ENCODE measurements at regions of chr1 and their contacts with region 1.

Region 1: GRCh38 chr1:200510228-200510623 is 100.4 kb upstream of the ZNF281 start:
- DNase-seq: peak in 34 of 35 experiments; percentile 14 to 83 (median 44)
- ATAC-seq: peak; percentile 65 to 80 (median 73)
- H3K4me3 ChIP-seq: no peak overlapping the region
- H3K4me3 Mint-ChIP-seq: no peak overlapping the region
- H3K27ac ChIP-seq: no peak overlapping the region
- H3K27ac Mint-ChIP-seq: no peak overlapping the region
- H3K4me1 ChIP-seq: no peaks in the 10 kb centered on the region
- H3K4me1 Mint-ChIP-seq: peaks cover 0 to 4% (median 3%) of the 10 kb centered on the region in 3 donors
- H3K27me3 ChIP-seq: peaks cover 0 to 6% of the 10 kb centered on the region in 2 experiments
- H3K27me3 Mint-ChIP-seq: peaks cover 0 to 14% of the 10 kb centered on the region in 2 donors

Region 2: DNA sequence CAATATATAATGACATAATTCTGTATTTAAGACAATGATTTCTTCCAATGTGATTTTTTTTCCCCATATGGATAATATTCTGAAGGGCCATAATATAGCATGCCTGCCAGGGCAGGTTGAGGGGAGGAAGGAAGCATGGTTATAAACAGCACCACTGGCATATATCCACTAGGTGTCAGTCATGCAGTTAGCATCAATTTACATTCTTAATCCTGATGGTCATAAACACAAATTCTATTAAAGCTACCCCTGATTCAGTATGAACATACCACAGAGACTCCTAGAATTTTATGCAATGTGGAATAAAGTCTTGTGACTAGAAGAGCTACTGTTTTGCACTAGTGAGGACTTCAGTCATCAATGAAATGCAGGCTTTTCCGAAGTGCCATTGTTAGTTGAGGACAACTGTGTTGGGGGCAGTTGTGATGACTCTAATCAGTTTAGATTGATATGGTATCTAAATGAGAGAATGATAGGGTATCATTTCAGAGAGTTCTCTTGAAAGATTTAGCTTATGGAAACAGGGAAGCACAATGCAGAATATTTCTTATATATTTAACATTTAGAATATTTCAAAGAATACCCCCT is 825.4 kb before region 1 on chr1:
- CTCF ChIA-PET with region 1: interaction called, 11 to 18 read pairs
- POLR2A ChIA-PET with region 1: no interaction called
- DNase-seq: peak in 9 of 35 experiments; percentile 0 to 59 (median 5)
- ATAC-seq: peak in 2 of 4 experiments; percentile 41 to 59
- H3K4me3 ChIP-seq: no peak overlapping the region
- H3K4me3 Mint-ChIP-seq: no peak overlapping the region
- H3K27ac ChIP-seq: no peak overlapping the region
- H3K27ac Mint-ChIP-seq: no peak overlapping the region
- H3K4me1 ChIP-seq: no peaks in the 10 kb centered on the region
- H3K4me1 Mint-ChIP-seq: no peaks in the 10 kb centered on the region
- H3K27me3 ChIP-seq: no peaks in the 10 kb centered on the region
- H3K27me3 Mint-ChIP-seq: peaks cover 11% of the 10 kb centered on the region in 2 donors

Region 3: DNA sequence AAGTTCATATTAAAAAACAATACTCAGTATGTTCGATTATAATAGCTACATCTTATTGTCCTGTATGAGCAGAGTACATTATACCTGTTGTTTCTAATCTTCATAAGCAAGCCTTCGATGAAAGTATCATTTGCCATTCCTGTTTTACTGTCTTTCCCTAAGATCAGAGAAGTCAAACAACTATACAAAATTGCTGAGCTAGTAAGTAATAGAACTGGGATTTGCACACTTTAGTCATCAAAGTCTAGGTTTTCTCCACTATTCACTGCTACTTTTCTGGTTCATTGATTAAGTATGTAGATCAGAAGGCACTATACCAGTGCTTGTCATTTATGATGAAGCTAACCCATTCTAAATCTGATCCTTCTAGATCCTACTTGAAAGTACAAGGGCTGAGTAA is 373.8 kb before region 1 on chr1:
- CTCF ChIA-PET with region 1: interaction called, 3 to 11 read pairs
- POLR2A ChIA-PET with region 1: no interaction called
- DNase-seq: no peak
- ATAC-seq: no peak
- H3K4me3 ChIP-seq: no peak overlapping the region
- H3K4me3 Mint-ChIP-seq: no peak overlapping the region
- H3K27ac ChIP-seq: no peak overlapping the region
- H3K27ac Mint-ChIP-seq: no peak overlapping the region
- H3K4me1 ChIP-seq: no peaks in the 10 kb centered on the region
- H3K4me1 Mint-ChIP-seq: peaks cover 0 to 4% (median 1%) of the 10 kb centered on the region in 3 donors
- H3K27me3 ChIP-seq: no peaks in the 10 kb centered on the region
- H3K27me3 Mint-ChIP-seq: peaks cover 0 to 2% of the 10 kb centered on the region in 2 donors

Region 4: GRCh38 chr1:200780545-200781369 is 270.5 kb after region 1 on chr1:
- CTCF ChIA-PET with region 1: no interaction called
- POLR2A ChIA-PET with region 1: no interaction called
- DNase-seq: no peak
- ATAC-seq: no peak
- H3K4me3 ChIP-seq: no peak overlapping the region
- H3K4me3 Mint-ChIP-seq: no peak overlapping the region
- H3K27ac ChIP-seq: no peak overlapping the region
- H3K27ac Mint-ChIP-seq: peak overlapping the region in 1 of 2 donors; percentile 1
- H3K4me1 ChIP-seq: no peaks in the 10 kb centered on the region
- H3K4me1 Mint-ChIP-seq: peaks cover 0 to 1% (median 0%) of the 10 kb centered on the region in 3 donors
- H3K27me3 ChIP-seq: no peaks in the 10 kb centered on the region
- H3K27me3 Mint-ChIP-seq: no peaks in the 10 kb centered on the region